ENCODE measurements at regions of chr17 and their contacts with region 1.

Region 1: GRCh38 chr17:40474419-40475002 is 26.9 kb downstream of the TNS4 start:
- DNase-seq: no peak
- H3K4me3 ChIP-seq: no peak overlapping the region
- H3K27ac ChIP-seq: no peak overlapping the region
- H3K4me1 ChIP-seq: peaks cover 12 to 15% of the 10 kb centered on the region in 2 experiments; a peak in 3 of 4 replicates
- H3K27me3 ChIP-seq: no peaks in the 10 kb centered on the region
- CTCF ChIP-seq: no peak
- EP300 ChIP-seq: no peak
- RAD21 ChIP-seq: no peak

Region 2: DNA sequence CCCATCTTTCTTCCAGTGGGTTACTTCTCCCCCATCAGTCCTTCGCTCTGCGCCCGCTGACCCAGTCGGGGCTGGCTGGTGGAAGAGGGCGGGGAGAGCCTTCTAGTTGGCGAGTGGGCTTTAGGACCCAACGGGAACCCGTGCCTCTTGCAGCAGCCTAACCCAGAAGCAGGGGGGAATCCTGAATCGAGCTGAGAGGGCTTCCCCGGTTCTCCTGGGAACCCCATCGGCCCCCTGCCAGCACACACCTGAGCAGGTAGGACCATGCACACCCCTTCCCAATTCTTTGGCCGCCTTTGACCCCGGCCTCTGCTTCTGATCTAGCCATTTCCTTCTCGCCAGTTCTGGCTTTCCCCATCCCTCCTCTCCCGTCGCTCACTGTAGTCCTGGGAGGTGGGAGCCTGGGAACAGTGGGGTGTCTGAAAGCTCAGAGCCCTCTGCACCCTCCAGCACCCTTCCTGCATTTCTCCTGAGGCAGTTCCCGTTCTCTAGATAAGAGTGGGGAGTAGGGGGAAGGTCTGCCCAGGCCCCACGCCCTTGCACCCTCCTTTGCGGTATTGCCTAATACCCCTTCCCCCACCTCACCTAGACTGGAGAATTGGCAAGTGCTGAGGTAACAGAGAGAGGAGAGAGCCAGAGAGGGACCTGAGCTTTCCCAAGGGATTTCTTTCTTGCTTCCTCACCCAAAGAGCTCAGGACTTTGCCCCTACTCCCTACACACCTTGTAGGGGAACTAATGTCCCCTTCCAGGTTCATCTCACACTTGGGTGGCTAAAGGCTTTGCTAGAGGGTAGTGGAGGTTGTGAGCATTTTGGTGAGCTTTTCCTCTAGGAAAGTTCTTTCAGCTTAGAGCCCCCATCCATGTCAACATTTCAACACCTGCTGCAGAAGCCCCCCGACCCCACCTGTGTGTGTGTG is 165.2 kb before region 1 on chr17 and contains the start of gene RARA:
- CTCF ChIA-PET with region 1: interaction called, 23 read pairs
- POLR2A ChIA-PET with region 1: no interaction called
- DNase-seq: peak; percentile 67
- H3K4me3 ChIP-seq: peak within 1 kb of the TSS; percentile 65 to 69
- H3K27ac ChIP-seq: peak within 1 kb of the TSS; percentile 95 to 99
- H3K4me1 ChIP-seq: peaks cover 69 to 90% of the 10 kb centered on the region in 2 experiments
- H3K27me3 ChIP-seq: no peaks in the 10 kb centered on the region
- CTCF ChIP-seq: no peak
- EP300 ChIP-seq: no peak
- RAD21 ChIP-seq: peak; percentile 27
- polyA plus RNA-seq, gene RARA: 8.9 and 13.3 TPM in 2 replicates

Region 3: GRCh38 chr17:40410082-40410481 is 64.4 kb before region 1 on chr17:
- CTCF ChIA-PET with region 1: interaction called, 37 read pairs
- POLR2A ChIA-PET with region 1: no interaction called
- DNase-seq: no peak
- H3K4me3 ChIP-seq: no peak overlapping the region
- H3K27ac ChIP-seq: 0 out of 4 replicates have a peak overlapping the region, but pooled peaks of 1 of the 2 experiments have one; percentile 0
- H3K4me1 ChIP-seq: no peaks in the 10 kb centered on the region
- H3K27me3 ChIP-seq: no peaks in the 10 kb centered on the region
- CTCF ChIP-seq: no peak
- EP300 ChIP-seq: no peak
- RAD21 ChIP-seq: no peak

Region 4: DNA sequence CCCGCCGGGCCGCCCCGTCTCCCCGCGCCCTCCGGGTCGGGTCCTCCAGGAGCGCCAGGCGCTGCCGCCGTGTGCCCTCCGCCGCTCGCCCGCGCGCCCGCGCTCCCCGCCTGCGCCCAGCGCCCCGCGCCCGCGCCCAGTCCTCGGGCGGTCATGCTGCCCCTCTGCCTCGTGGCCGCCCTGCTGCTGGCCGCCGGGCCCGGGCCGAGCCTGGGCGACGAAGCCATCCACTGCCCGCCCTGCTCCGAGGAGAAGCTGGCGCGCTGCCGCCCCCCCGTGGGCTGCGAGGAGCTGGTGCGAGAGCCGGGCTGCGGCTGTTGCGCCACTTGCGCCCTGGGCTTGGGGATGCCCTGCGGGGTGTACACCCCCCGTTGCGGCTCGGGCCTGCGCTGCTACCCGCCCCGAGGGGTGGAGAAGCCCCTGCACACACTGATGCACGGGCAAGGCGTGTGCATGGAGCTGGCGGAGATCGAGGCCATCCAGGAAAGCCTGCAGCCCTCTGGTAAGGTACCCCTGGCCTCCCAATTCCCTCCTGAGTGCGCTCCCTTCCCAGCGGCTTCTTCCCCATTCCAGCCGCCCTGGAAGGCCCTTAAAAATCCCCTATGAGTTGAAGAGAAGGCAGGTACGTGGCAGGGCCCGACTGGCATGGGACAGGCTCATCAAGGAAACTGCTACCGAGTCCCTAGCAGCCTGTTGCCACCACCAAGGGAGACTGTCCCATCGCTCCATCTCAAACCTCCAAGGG is 30.8 kb before region 1 on chr17:
- CTCF ChIA-PET with region 1: interaction called, 253 read pairs
- POLR2A ChIA-PET with region 1: interaction called, 5 read pairs
- DNase-seq: peak; percentile 92
- H3K4me3 ChIP-seq: peak overlapping the region; percentile 62 to 81
- H3K27ac ChIP-seq: peak overlapping the region; percentile 74 to 77
- H3K4me1 ChIP-seq: peaks cover 3 to 46% of the 10 kb centered on the region in 2 experiments; a peak in 2 of 4 replicates
- H3K27me3 ChIP-seq: no peaks in the 10 kb centered on the region
- CTCF ChIP-seq: peak; percentile 50
- EP300 ChIP-seq: no peak
- RAD21 ChIP-seq: peak; percentile 56

Region 5: GRCh38 chr17:40490289-40490853 is 15.9 kb after region 1 on chr17:
- CTCF ChIA-PET with region 1: interaction called, 23 read pairs
- POLR2A ChIA-PET with region 1: interaction called, 6 read pairs
- DNase-seq: peak; percentile 89
- H3K4me3 ChIP-seq: no peak overlapping the region
- H3K27ac ChIP-seq: peak overlapping the region in 1 of 2 experiments; percentile 84; a peak in 2 of 4 replicates
- H3K4me1 ChIP-seq: peaks cover 24 to 34% of the 10 kb centered on the region in 2 experiments
- H3K27me3 ChIP-seq: no peaks in the 10 kb centered on the region
- CTCF ChIP-seq: no peak
- EP300 ChIP-seq: peak in 1 of 2 experiments; percentile 62; a peak in 1 of 4 replicates
- RAD21 ChIP-seq: peak; percentile 45

Region 6: DNA sequence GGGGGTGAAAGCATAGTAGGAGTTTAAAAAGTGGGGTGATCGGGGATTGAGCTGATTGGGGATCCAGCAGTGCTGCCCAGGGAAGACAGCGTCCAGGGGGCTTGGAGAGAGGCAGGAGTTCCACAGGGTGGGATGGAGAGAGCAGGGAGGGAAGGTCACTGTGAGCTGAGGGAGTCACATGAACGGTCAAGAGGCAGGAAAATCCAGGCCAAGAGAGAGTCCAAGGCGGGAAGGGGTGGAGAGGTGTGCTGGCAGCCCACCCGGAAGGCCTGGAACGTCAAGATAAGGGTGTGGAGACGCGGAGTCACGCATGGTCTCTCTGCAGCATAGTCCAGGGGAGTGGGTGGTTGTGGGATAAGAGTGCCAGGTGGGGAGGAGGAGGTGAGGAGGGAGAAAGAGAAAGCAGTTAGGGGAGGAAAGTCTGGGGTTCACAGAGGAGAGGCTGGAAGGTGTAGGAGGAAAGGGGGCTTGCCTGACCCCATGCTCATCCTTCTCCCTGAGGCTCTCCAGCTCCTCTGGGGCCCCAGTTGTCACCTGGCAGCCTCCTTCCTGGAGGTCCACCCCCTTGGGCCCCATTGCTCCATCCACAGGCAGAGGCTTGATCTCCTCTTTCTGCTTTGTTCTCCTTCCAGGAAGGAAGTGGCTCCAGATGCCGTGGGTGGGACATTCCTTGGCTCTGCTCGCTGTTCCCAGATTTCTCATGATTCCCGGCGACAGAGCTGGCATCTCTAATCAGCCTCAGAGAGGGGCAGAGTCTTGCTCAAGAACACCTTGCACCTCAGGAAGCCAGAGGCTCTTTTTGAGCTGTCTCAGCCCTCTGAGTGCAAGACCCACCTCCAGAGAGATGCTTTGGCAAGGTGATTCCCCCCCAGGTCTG is 62.0 kb after region 1 on chr17:
- CTCF ChIA-PET with region 1: interaction called, 116 read pairs
- POLR2A ChIA-PET with region 1: no interaction called
- DNase-seq: no peak
- H3K4me3 ChIP-seq: no peak overlapping the region
- H3K27ac ChIP-seq: no peak overlapping the region; a peak in 1 of 4 replicates
- H3K4me1 ChIP-seq: peaks cover 5 to 49% of the 10 kb centered on the region in 2 experiments; a peak in 2 of 4 replicates
- H3K27me3 ChIP-seq: no peaks in the 10 kb centered on the region
- CTCF ChIP-seq: no peak
- EP300 ChIP-seq: no peak
- RAD21 ChIP-seq: no peak

Measured in SK-N-SH (cell line).